Naive thymus-derived CD4-positive, alpha-beta T cell (primary cell): ENCODE measurements at regions of chr2 and their contacts with region 1.

Region 1: GRCh38 chr2:70440621-70441020 is 113.0 kb downstream of the TGFA start:
- DNase-seq: peak in 7 of 9 donors; percentile 54 to 79 (median 74)
- ATAC-seq: peak; percentile 90
- H3K4me3 ChIP-seq: peak overlapping the region; percentile 29
- H3K4me3 Mint-ChIP-seq: peak overlapping the region; percentile 27 to 83 (median 76)
- H3K27ac ChIP-seq: peak overlapping the region; percentile 39
- H3K27ac Mint-ChIP-seq: peak overlapping the region; percentile 77 to 98 (median 91)
- H3K4me1 ChIP-seq: peaks cover 11 to 54% of the 10 kb centered on the region in 2 donors
- H3K4me1 Mint-ChIP-seq: peaks cover 23 to 78% (median 67%) of the 10 kb centered on the region in 7 donors
- H3K27me3 ChIP-seq: no peaks in the 10 kb centered on the region
- H3K27me3 Mint-ChIP-seq: peaks cover 0 to 13% (median 0%) of the 10 kb centered on the region in 5 donors

Region 2: GRCh38 chr2:68789603-68790002 is 1651.0 kb before region 1 on chr2:
- CTCF ChIA-PET with region 1: no interaction called
- POLR2A ChIA-PET with region 1: no interaction called
- intact Hi-C with region 1: no loop called
- DNase-seq: no peak
- ATAC-seq: peak; percentile 73
- H3K4me3 ChIP-seq: no peak overlapping the region
- H3K4me3 Mint-ChIP-seq: no peak overlapping the region
- H3K27ac ChIP-seq: peak overlapping the region; percentile 40
- H3K27ac Mint-ChIP-seq: peak overlapping the region in 6 of 9 donors; percentile 13 to 88 (median 44)
- H3K4me1 ChIP-seq: peaks cover 10 to 44% of the 10 kb centered on the region in 2 donors
- H3K4me1 Mint-ChIP-seq: peaks cover 29 to 48% (median 44%) of the 10 kb centered on the region in 7 donors
- H3K27me3 ChIP-seq: no peaks in the 10 kb centered on the region
- H3K27me3 Mint-ChIP-seq: no peaks in the 10 kb centered on the region

Region 3: DNA sequence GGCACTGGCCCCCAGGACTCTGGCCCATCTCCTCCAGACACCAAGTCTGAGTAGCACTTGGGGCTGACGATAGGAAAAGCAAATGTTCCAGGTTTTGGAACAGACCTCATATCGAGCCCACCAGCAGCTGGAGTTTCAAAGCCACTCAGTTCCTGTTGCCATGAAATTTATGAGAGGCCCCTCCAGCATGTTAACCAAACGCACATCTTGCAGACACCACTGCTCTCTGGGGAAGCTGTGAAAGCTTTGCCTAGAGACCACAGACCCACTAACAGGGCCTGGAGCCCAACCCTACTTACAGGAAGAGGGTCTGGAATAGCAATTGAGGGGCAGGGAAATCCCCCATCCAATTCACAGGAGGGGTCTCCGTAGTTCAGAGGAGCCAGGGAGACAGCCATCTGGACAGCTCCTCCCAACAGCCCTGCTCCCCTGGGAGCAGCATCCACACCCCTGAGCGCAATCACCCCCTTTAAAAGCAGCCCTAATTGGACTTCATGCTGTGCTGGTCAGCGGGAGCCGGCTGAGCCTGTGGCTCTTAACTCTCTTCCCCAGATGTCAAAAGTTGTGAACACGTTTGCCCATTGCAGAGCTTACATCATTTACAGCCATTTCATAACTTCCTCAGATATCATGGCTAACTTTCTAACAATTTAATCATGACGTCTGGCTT is 31.7 kb after region 1 on chr2:
- CTCF ChIA-PET with region 1: no interaction called
- POLR2A ChIA-PET with region 1: interaction called, 3 read pairs
- intact Hi-C with region 1: loop called in 1 of 2 experiments (anchors 2 kb)
- DNase-seq: no peak
- ATAC-seq: peak; percentile 51
- H3K4me3 ChIP-seq: no peak overlapping the region
- H3K4me3 Mint-ChIP-seq: peak overlapping the region in 3 of 10 donors; percentile 51 to 60 (median 56)
- H3K27ac ChIP-seq: no peak overlapping the region
- H3K27ac Mint-ChIP-seq: peak overlapping the region in 2 of 9 donors; percentile 8 to 53
- H3K4me1 ChIP-seq: peaks cover 0 to 44% of the 10 kb centered on the region in 2 donors
- H3K4me1 Mint-ChIP-seq: peaks cover 15 to 86% (median 69%) of the 10 kb centered on the region in 7 donors
- H3K27me3 ChIP-seq: no peaks in the 10 kb centered on the region
- H3K27me3 Mint-ChIP-seq: peaks cover 0 to 4% (median 0%) of the 10 kb centered on the region in 5 donors

Region 4: GRCh38 chr2:70647873-70648481 is 207.4 kb after region 1 on chr2:
- CTCF ChIA-PET with region 1: interaction called, 3 read pairs
- POLR2A ChIA-PET with region 1: no interaction called
- intact Hi-C with region 1: loop called in 1 of 2 experiments (anchors 5 kb)
- DNase-seq: peak; percentile 55 to 81 (median 75)
- ATAC-seq: peak; percentile 85
- H3K4me3 ChIP-seq: no peak overlapping the region
- H3K4me3 Mint-ChIP-seq: no peak overlapping the region
- H3K27ac ChIP-seq: no peak overlapping the region
- H3K27ac Mint-ChIP-seq: peak overlapping the region in 1 of 9 donors; percentile 13
- H3K4me1 ChIP-seq: no peaks in the 10 kb centered on the region
- H3K4me1 Mint-ChIP-seq: no peaks in the 10 kb centered on the region
- H3K27me3 ChIP-seq: no peaks in the 10 kb centered on the region
- H3K27me3 Mint-ChIP-seq: peaks cover 0 to 30% (median 4%) of the 10 kb centered on the region in 5 donors

Region 5: GRCh38 chr2:70753902-70754301 is 313.3 kb after region 1 on chr2:
- CTCF ChIA-PET with region 1: no interaction called
- POLR2A ChIA-PET with region 1: no interaction called
- intact Hi-C with region 1: no loop called
- DNase-seq: no peak
- ATAC-seq: no peak
- H3K4me3 ChIP-seq: no peak overlapping the region
- H3K4me3 Mint-ChIP-seq: no peak overlapping the region
- H3K27ac ChIP-seq: no peak overlapping the region
- H3K27ac Mint-ChIP-seq: no peak overlapping the region
- H3K4me1 ChIP-seq: no peaks in the 10 kb centered on the region
- H3K4me1 Mint-ChIP-seq: peaks cover 0 to 10% (median 2%) of the 10 kb centered on the region in 7 donors
- H3K27me3 ChIP-seq: no peaks in the 10 kb centered on the region
- H3K27me3 Mint-ChIP-seq: peaks cover 0 to 10% (median 4%) of the 10 kb centered on the region in 5 donors

Region 6: DNA sequence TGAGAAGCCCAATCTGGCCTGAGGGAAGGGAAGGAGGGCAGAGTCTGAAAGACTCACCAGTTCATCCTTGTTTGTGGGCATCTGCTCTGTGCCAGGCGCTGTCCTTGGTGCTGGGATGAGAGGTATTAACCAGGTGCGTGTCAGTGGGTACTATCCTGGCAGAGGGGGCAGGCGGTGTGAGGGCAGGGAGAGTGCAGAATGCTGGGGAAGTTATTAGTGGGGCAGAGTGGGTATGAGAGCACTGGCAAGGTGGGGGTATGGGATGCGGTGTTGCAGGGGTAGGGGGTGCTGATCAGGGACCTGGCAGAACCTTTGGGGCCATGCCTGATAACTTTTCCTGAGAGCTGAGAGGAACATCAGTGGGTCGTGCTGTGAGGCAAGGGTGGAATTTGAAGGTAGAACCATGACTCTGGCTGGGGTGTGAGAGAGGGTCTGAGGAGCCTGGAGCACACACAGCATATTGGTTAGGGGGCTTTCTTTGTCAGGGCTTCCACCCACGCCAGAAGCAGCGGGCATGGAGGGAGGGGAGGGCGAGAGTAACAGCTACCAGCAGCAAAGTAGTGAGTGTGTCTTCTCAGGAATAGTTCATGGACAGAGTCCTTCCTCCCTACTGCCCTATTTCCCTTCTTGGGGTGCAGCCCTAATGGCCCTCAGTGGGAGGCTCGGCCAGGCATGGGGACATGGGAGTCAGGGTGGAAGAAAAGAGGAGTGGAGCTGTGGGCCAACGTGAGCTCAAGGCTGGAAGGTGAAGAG is 1416.3 kb after region 1 on chr2:
- CTCF ChIA-PET with region 1: no interaction called
- POLR2A ChIA-PET with region 1: no interaction called
- intact Hi-C with region 1: no loop called
- DNase-seq: no peak
- ATAC-seq: no peak
- H3K4me3 ChIP-seq: no peak overlapping the region
- H3K4me3 Mint-ChIP-seq: no peak overlapping the region
- H3K27ac ChIP-seq: no peak overlapping the region
- H3K27ac Mint-ChIP-seq: no peak overlapping the region
- H3K4me1 ChIP-seq: no peaks in the 10 kb centered on the region
- H3K4me1 Mint-ChIP-seq: no peaks in the 10 kb centered on the region
- H3K27me3 ChIP-seq: no peaks in the 10 kb centered on the region
- H3K27me3 Mint-ChIP-seq: peaks cover 0 to 32% (median 4%) of the 10 kb centered on the region in 5 donors